Esophagus muscularis mucosa (tissue), 4 donors: ENCODE measurements at regions of chr7 and their contacts with region 1.

Region 1: DNA sequence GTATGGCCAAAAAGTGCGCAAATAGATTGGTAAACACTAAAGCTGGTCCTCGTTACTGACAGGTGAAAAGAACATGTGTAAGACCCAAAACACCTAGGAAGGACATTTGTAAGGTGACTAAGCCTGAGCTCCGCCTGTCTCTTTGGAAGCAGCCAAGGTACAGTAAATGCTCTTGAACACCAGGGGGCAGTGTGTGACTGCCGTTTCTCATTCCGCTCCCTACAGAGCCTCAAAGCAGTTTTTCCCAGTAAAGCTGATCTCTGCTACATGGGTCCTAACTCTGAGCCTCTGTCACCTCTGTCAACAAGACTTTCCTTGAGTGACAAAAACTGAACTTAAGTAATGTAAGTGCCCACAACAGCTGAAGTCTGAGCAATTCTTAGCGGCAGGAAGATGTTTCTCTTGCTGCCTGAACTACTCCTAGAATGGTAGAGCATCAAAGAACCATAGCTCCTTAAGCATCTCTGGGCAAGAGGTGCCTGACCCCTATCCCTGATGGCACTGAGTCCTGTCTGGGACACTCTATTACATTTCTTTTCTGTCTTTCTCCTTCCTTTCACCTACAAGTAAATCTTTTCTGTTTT is 238.0 kb upstream of the INHBA start:
- DNase-seq: no peak
- H3K4me3 ChIP-seq: no peak overlapping the region
- H3K27ac ChIP-seq: no peak overlapping the region
- H3K4me1 ChIP-seq: peaks cover 9 to 35% (median 32%) of the 10 kb centered on the region in 4 donors
- H3K27me3 ChIP-seq: no peaks in the 10 kb centered on the region
- CTCF ChIP-seq: peak; percentile 85 to 92 (median 87)
- EP300 ChIP-seq: no peak
- POLR2A ChIP-seq: no peak

Region 2: DNA sequence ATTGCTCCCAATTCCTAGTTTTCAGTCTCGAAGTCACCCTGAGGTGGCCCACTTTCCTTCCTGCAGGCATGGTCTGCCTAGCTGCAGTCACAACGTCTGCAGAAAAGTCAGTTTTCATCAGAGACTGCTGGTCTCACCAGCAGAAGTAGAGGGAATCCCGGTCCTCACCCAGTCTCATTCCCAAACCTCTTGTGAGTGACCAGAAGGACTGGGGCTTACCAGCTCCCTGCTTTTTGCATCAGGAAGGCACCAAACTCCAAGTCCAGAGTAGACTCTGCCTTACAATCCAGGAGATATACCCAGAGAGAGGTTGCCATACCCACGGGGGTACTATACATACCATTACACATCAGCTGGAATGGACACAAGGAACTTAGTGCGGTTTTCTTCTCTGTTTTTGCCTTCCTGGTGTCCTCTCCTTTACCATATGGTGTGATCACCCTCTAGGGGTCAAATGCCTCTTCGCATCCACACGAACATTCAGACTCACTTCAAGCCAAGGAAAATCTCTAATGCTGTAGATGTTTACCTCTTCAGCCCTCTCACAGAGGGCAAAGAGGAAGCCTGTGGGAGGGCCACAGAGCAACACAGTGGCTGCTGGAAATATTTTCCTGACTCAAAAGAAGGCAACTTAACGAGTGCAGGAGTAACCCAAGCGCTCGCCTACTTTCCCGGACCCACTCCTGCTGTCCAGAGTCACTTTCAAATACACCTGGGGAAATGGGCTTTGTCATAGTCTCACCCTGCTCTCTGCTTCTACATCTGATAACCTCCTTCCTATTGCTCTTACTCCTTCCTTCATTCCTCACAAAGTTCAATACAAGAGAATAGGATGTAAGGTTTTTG is 750.2 kb after region 1 on chr7:
- intact Hi-C with region 1: loop called (anchors 5 kb)
- DNase-seq: peak; percentile 91
- H3K4me3 ChIP-seq: no peak overlapping the region
- H3K27ac ChIP-seq: peak overlapping the region in 1 of 4 donors; percentile 11
- H3K4me1 ChIP-seq: peaks cover 5 to 44% (median 36%) of the 10 kb centered on the region in 4 donors
- H3K27me3 ChIP-seq: no peaks in the 10 kb centered on the region
- CTCF ChIP-seq: peak; percentile 63 to 72 (median 66)
- EP300 ChIP-seq: no peak
- POLR2A ChIP-seq: no peak

Region 3: DNA sequence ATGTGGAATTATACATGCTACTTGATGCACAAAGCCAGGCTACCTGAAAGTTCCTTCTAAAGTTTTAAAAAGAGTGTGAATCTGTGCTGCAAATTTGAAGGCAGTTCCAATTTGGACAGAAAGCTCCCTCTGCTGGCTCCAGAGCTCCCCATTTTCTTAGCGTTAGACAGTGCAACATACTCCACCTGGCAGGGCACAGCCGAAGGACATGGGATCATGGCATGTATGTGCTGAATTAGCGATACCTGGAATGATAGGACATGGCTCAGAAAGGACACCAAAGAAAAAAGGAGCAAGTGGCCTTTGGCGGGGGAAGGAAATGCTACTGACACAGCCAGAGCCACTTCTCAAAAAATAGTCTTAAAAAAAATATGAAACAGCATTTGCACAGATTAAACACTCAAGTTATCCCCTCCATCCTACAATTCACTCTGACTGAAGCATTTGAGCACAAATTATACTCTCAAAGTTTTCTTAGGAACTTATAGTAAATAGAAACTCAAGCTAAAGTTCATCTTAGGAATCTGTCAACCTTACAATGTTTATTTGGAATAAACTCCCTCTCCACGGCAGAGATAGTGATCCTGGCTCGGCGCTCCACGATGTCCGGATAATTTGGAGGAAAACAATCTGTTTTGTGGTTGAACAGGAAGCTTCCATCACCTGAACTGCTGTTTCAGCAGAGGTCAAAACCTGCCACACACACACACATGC is 891.0 kb after region 1 on chr7:
- intact Hi-C with region 1: loop called (anchors 2 kb)
- DNase-seq: no peak
- H3K4me3 ChIP-seq: peak overlapping the region in 3 of 4 donors; percentile 0 to 22 (median 4)
- H3K27ac ChIP-seq: peak overlapping the region in 2 of 4 donors; percentile 25 to 54
- H3K4me1 ChIP-seq: peaks cover 5 to 31% (median 28%) of the 10 kb centered on the region in 4 donors
- H3K27me3 ChIP-seq: no peaks in the 10 kb centered on the region
- CTCF ChIP-seq: peak; percentile 72 to 79 (median 75)
- EP300 ChIP-seq: no peak
- POLR2A ChIP-seq: no peak